ENCODE measurements at regions of chr10 and their contacts with region 1.

Region 1: DNA sequence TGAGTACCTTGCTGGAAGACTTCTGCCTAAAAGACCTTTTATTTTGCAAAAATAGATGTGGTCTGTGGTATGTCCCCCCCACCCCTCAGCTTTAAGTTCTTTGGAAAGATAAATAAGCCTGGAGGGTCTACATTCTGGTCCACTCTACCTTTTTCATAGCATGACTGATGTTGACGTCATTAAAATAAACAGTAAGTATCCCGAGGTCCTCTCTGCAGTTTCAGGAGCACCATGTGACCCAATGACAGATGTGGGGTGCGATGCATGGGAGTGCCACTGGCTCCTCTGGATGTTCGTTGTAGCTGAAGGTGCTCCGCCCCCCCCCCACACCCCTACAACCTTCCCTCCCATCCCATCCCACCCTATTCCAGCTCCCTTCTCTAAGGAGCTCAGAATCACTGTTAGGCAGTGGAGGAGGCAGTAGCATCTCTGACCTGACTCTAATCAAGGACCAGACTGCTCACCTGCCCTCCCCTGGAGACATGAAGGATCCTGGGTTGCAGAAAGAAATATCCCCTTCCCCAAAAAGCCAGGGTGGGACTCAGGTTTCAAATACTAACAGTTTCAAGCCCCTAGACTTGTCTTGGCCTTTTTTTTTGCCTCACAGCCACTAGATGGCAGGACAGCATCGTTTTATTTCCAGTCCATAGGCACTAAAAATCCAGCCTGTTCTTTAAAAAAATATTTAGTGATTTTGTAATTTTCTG is 25.1 kb downstream of the CASP7 start:
- DNase-seq: peak in 5 of 9 donors; percentile 12 to 30 (median 19)
- ATAC-seq: no peak
- H3K4me3 ChIP-seq: no peak overlapping the region
- H3K4me3 Mint-ChIP-seq: no peak overlapping the region
- H3K27ac ChIP-seq: no peak overlapping the region
- H3K27ac Mint-ChIP-seq: no peak overlapping the region
- H3K4me1 ChIP-seq: peaks cover 0 to 11% of the 10 kb centered on the region in 2 donors
- H3K4me1 Mint-ChIP-seq: peaks cover 20 to 39% (median 33%) of the 10 kb centered on the region in 7 donors
- H3K27me3 ChIP-seq: no peaks in the 10 kb centered on the region
- H3K27me3 Mint-ChIP-seq: no peaks in the 10 kb centered on the region

Region 2: GRCh38 chr10:114103284-114103683 is 398.5 kb after region 1 on chr10:
- CTCF ChIA-PET with region 1: interaction called, 7 read pairs
- POLR2A ChIA-PET with region 1: no interaction called
- intact Hi-C with region 1: loop called (anchors 1 to 2 kb)
- DNase-seq: peak in 5 of 9 donors; percentile 17 to 39 (median 34)
- ATAC-seq: no peak
- H3K4me3 ChIP-seq: no peak overlapping the region
- H3K4me3 Mint-ChIP-seq: peak overlapping the region in 3 of 10 donors; percentile 6 to 39 (median 13)
- H3K27ac ChIP-seq: no peak overlapping the region
- H3K27ac Mint-ChIP-seq: no peak overlapping the region
- H3K4me1 ChIP-seq: peaks cover 7 to 10% of the 10 kb centered on the region in 2 donors
- H3K4me1 Mint-ChIP-seq: peaks cover 16 to 31% (median 25%) of the 10 kb centered on the region in 7 donors
- H3K27me3 ChIP-seq: peaks cover 4 to 6% of the 10 kb centered on the region in 2 donors
- H3K27me3 Mint-ChIP-seq: peaks cover 24 to 46% (median 27%) of the 10 kb centered on the region in 5 donors

Measured in naive thymus-derived CD4-positive, alpha-beta T cell (primary cell).